CD4-positive, alpha-beta T cell (primary cell): ENCODE measurements at regions of chr15 and their contacts with region 1.

Region 1: GRCh38 chr15:43329960-43330779 is at the start of gene LCMT2:
- DNase-seq: peak; percentile 81 to 97 (median 88)
- ATAC-seq: peak; percentile 83
- H3K4me3 ChIP-seq: peak within 1 kb of the TSS; percentile 79
- H3K4me3 Mint-ChIP-seq: peak within 1 kb of the TSS; percentile 98
- H3K27ac ChIP-seq: peak within 1 kb of the TSS; percentile 92 to 96
- H3K27ac Mint-ChIP-seq: peak within 1 kb of the TSS; percentile 100
- H3K4me1 ChIP-seq: peaks cover 23% of the 10 kb centered on the region
- H3K4me1 Mint-ChIP-seq: peaks cover 41% of the 10 kb centered on the region
- H3K27me3 ChIP-seq: no peaks in the 10 kb centered on the region
- H3K27me3 Mint-ChIP-seq: peaks cover 3% of the 10 kb centered on the region
- CTCF ChIP-seq: peak; percentile 15
- total RNA-seq, gene LCMT2: 5.8 to 5.9 TPM

Region 2: GRCh38 chr15:42736793-42737528 is 593.2 kb before region 1 on chr15 and contains the start of gene CDAN1:
- CTCF ChIA-PET with region 1: no interaction called
- POLR2A ChIA-PET with region 1: no interaction called
- intact Hi-C with region 1: loop called in 1 of 2 experiments (anchors 10 kb)
- DNase-seq: peak; percentile 84 to 97 (median 92)
- ATAC-seq: peak; percentile 91
- H3K4me3 ChIP-seq: peak within 1 kb of the TSS; percentile 65
- H3K4me3 Mint-ChIP-seq: peak within 1 kb of the TSS; percentile 93
- H3K27ac ChIP-seq: peak within 1 kb of the TSS; percentile 64 to 69
- H3K27ac Mint-ChIP-seq: peak within 1 kb of the TSS; percentile 88
- H3K4me1 ChIP-seq: peaks cover 25% of the 10 kb centered on the region
- H3K4me1 Mint-ChIP-seq: peaks cover 18% of the 10 kb centered on the region
- H3K27me3 ChIP-seq: no peaks in the 10 kb centered on the region
- H3K27me3 Mint-ChIP-seq: no peaks in the 10 kb centered on the region
- CTCF ChIP-seq: no peak
- total RNA-seq, gene CDAN1: 23.2 to 24.7 TPM

Region 3: GRCh38 chr15:43249699-43250203 is 80.4 kb before region 1 on chr15:
- CTCF ChIA-PET with region 1: no interaction called
- POLR2A ChIA-PET with region 1: no interaction called
- intact Hi-C with region 1: no loop called
- DNase-seq: peak in 2 of 14 experiments; percentile 42 to 55
- ATAC-seq: no peak
- H3K4me3 ChIP-seq: no peak overlapping the region
- H3K4me3 Mint-ChIP-seq: no peak overlapping the region
- H3K27ac ChIP-seq: no peak overlapping the region
- H3K27ac Mint-ChIP-seq: no peak overlapping the region
- H3K4me1 ChIP-seq: peaks cover 3% of the 10 kb centered on the region
- H3K4me1 Mint-ChIP-seq: no peaks in the 10 kb centered on the region
- H3K27me3 ChIP-seq: no peaks in the 10 kb centered on the region
- H3K27me3 Mint-ChIP-seq: peaks cover 10% of the 10 kb centered on the region
- CTCF ChIP-seq: no peak

Region 4: DNA sequence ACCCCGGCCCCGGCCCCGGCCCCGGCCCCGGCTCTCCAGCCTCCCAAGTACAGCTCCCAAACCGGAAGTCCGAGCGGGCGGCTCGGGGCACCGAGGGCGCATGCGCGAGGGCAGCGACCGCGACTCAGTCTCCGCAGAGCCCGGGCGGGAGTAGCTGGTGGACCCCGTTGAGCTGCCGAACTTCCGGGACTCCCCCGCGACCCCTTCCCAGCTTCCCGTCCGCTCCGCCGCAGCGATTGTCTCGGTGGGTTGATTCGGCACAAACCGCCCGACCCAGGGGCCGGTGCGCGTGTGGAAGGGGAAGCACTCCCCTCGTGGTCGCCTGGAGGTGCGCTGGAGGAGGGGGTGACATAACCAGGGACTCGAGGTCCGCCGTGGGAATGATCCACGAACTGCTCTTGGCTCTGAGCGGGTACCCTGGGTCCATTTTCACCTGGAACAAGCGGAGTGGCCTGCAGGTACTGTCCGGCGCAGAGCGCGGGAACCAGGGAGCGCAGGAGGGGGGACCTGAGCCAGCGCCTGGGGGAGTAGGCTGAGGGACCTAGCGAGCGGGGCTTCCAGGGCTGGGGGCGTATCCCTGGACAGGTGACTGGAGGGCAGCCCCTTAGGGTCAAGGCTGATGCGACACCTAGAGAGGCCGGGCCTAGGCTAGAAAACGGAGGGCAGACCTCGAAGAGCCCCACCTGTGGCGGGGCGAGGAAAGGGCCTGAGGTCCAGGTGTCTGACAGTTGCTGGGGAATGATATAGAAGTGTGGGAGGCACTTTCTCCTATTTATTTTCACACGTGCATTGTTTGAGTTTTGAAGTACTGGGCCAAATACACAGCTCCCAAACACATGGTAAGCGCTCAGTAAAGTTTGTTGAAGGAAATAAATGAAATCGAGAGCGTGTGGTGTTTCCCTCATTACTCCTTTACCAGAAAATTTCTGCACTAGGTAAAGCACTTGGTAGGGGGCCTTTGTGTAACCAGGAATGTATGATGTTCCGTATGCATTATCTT is 41.1 kb after region 1 on chr15 and contains the starts of genes TUBGCP4 and ZSCAN29:
- CTCF ChIA-PET with region 1: no interaction called
- POLR2A ChIA-PET with region 1: interaction called, 22 read pairs
- intact Hi-C with region 1: loop called (anchors 2 to 5 kb)
- DNase-seq: peak; percentile 36 to 86 (median 64)
- ATAC-seq: peak; percentile 69
- H3K4me3 ChIP-seq: peak within 1 kb of the TSS; percentile 90
- H3K4me3 Mint-ChIP-seq: peak within 1 kb of the TSS; percentile 91
- H3K27ac ChIP-seq: peak within 1 kb of the TSS; percentile 36 to 46
- H3K27ac Mint-ChIP-seq: peak within 1 kb of the TSS; percentile 74
- H3K4me1 ChIP-seq: peaks cover 35% of the 10 kb centered on the region
- H3K4me1 Mint-ChIP-seq: peaks cover 57% of the 10 kb centered on the region
- H3K27me3 ChIP-seq: no peaks in the 10 kb centered on the region
- H3K27me3 Mint-ChIP-seq: no peaks in the 10 kb centered on the region
- CTCF ChIP-seq: peak; percentile 70
- total RNA-seq, gene TUBGCP4: 4.1 to 5.9 TPM
- total RNA-seq, gene ZSCAN29: 7.1 to 7.4 TPM

Region 5: DNA sequence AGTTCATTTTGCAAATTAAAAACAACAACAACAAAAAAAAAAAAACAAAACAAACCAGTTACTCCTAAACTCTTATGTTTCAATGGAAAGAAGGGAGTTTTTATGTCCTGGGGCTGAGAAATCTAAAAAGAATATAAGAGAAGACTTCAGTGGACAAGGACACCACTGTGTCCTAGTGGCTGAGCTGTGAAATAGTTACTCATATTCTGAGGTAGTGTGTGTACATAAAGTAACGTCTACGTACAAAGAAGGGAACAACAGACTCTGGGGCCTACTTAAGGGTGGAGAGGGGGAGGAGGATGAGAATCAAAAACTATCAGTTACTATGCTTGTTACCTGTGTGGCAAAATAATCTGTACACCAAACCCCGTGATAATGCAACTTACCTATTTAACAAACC is 168.8 kb after region 1 on chr15:
- CTCF ChIA-PET with region 1: no interaction called
- POLR2A ChIA-PET with region 1: no interaction called
- intact Hi-C with region 1: loop called in 1 of 2 experiments (anchors 5 kb)
- DNase-seq: no peak
- ATAC-seq: no peak
- H3K4me3 ChIP-seq: no peak overlapping the region
- H3K4me3 Mint-ChIP-seq: no peak overlapping the region
- H3K27ac ChIP-seq: no peak overlapping the region
- H3K27ac Mint-ChIP-seq: no peak overlapping the region
- H3K4me1 ChIP-seq: no peaks in the 10 kb centered on the region
- H3K4me1 Mint-ChIP-seq: no peaks in the 10 kb centered on the region
- H3K27me3 ChIP-seq: no peaks in the 10 kb centered on the region
- H3K27me3 Mint-ChIP-seq: no peaks in the 10 kb centered on the region
- CTCF ChIP-seq: no peak